ENCODE measurements at regions of chr11 and their contacts with region 1.

Region 1: GRCh38 chr11:61733120-61733978 is 19.1 kb upstream of the MYRF start:
- DNase-seq: peak; percentile 86
- H3K4me3 Mint-ChIP-seq: no peak overlapping the region
- H3K27ac Mint-ChIP-seq: no peak overlapping the region
- H3K4me1 Mint-ChIP-seq: peaks cover 23% of the 10 kb centered on the region
- H3K27me3 Mint-ChIP-seq: no peaks in the 10 kb centered on the region
- CTCF ChIP-seq: peak; percentile 94

Region 2: DNA sequence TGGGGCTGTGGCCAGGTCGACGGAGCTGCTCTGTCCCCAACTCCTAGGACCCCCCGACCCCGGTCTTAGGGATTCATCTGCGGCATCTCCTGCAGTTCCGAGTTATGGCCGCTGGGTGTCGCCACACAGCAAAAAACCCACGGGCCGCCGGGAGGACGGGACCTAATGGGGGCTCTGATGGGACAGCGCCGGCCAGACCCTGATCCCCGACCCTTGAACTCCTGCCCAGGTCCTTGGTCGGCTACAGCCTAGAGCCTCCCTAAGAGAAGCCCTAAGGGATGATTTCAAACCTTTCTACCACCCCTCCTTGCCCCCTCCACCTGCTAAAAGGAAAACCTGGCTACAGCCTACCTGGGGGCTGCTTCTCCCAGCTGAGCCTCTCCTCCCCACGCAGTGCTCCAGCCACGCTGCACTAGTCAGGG is 255.6 kb before region 1 on chr11:
- CTCF ChIA-PET with region 1: interaction called, 5 read pairs
- POLR2A ChIA-PET with region 1: no interaction called
- intact Hi-C with region 1: loop called (anchors 10 kb)
- DNase-seq: peak; percentile 27
- H3K4me3 Mint-ChIP-seq: no peak overlapping the region
- H3K27ac Mint-ChIP-seq: no peak overlapping the region
- H3K4me1 Mint-ChIP-seq: peaks cover 9% of the 10 kb centered on the region
- H3K27me3 Mint-ChIP-seq: no peaks in the 10 kb centered on the region
- CTCF ChIP-seq: peak; percentile 88

Region 3: DNA sequence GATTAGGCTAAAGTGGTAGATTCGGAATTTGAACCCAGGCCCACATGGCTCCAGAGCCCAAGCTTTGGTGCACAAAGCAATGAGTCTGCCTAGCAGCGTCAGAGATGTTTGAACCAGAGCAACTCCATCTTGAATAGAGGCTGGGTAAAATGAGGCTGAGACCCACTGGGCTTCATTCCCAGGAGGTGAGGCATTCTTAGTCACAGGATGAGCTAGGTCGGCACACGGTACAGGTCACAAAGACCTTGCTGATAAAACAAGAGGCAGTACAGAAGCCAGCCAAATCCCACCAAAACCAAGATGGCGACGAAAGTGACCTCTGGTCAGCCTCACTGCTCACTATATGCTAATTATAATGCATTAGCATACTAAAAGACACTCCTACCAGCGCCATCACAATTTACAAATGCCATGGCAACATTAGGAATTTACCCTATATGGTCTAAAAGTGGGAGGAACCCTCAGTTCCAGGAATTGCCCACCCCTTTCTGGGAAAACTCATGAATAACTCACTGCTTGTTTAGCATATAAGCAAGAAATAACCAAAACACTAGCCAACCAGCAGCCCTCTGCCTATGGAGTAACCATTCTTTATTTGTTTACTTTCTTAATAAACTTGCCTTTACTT is 93.4 kb before region 1 on chr11:
- CTCF ChIA-PET with region 1: interaction called, 20 read pairs
- POLR2A ChIA-PET with region 1: no interaction called
- intact Hi-C with region 1: loop called (anchors 2 kb)
- DNase-seq: no peak
- H3K4me3 Mint-ChIP-seq: no peak overlapping the region
- H3K27ac Mint-ChIP-seq: no peak overlapping the region
- H3K4me1 Mint-ChIP-seq: no peaks in the 10 kb centered on the region
- H3K27me3 Mint-ChIP-seq: peaks cover 27% of the 10 kb centered on the region
- CTCF ChIP-seq: no peak

Region 4: DNA sequence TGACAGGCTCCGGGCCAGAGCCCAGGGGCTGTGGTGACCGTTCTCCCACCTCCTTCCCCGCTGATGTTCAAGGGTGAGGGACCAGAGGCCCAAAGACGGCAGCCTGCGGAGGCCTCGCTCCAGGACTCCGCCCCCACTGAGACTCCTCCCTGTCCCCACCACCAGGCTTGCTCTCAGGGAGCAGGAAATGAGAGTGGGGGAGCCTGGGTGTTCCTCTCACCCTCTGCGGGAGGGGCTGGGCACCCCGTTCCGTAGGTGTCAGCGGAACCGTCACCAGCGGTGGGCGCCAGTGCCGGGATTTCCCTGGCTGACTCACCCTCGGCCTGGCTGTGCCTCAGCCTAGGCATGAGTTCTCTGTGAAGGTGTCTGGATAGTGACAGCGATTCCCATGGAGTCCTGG is 37.4 kb before region 1 on chr11:
- CTCF ChIA-PET with region 1: interaction called, 24 read pairs
- POLR2A ChIA-PET with region 1: interaction called, 9 read pairs
- intact Hi-C with region 1: loop called (anchors 1 kb)
- DNase-seq: peak; percentile 90
- H3K4me3 Mint-ChIP-seq: peak overlapping the region; percentile 55
- H3K27ac Mint-ChIP-seq: peak overlapping the region; percentile 31
- H3K4me1 Mint-ChIP-seq: peaks cover 44% of the 10 kb centered on the region
- H3K27me3 Mint-ChIP-seq: no peaks in the 10 kb centered on the region
- CTCF ChIP-seq: no peak

Region 5: DNA sequence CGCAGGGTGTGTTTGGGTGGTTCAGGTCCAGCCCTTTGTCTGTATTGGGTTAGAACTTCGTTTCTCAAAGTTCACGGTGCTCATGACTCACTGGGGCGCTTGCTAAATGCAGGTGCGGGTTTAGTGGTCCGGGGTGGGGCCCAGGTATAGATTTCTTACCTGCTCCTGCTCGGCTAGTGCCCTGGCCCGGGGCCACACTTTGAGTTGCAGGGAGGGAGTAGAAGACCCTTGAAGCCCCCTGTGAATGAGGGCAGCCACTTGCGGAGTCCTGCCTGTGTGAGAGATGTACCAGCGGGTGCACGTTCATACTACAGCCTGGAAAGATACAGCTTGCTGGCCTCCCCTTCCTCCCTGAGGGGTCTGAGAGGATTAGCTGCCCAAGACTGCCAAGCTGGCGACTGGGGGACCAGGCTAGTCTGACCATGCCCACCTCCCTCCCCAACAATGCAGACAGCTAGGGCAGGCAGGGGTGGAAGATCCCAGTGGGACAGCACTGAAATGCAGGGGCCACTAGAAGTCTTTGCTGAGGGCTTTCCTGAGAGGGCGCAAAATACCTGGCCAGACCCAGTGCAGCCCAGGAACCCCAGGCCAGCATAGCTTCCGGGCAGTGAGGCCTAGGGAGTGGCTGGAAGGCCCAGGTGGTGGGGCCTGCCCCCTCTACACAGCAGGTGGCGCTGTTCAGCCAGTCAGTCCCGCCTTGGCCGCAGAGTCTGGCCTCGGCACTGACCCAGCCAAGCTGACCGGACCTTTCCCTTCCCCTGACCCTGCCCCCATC is 14.0 kb after region 1 on chr11:
- CTCF ChIA-PET with region 1: interaction called, 11 read pairs
- POLR2A ChIA-PET with region 1: no interaction called
- intact Hi-C with region 1: no loop called
- DNase-seq: peak; percentile 69
- H3K4me3 Mint-ChIP-seq: no peak overlapping the region
- H3K27ac Mint-ChIP-seq: no peak overlapping the region
- H3K4me1 Mint-ChIP-seq: no peaks in the 10 kb centered on the region
- H3K27me3 Mint-ChIP-seq: no peaks in the 10 kb centered on the region
- CTCF ChIP-seq: peak; percentile 84

Region 6: DNA sequence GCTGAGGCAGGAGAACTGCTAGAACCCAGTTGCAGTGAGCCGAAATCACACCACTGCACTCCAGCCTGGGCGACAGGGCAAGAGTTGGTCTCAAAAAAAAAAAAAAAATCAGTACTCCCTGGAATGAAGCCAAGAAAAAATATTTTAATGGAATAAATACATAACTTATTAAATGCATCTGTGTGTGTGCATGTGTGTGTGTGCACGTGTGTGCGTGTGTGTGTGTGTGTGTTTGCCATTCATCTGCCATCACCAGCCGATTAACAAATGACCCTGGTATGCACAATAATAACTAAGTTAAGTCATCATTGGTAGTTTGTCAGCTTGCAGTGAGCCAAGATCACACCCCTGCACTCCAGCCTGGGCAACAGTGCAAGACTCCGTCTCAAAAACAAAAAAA is 650.5 kb after region 1 on chr11:
- CTCF ChIA-PET with region 1: no interaction called
- POLR2A ChIA-PET with region 1: no interaction called
- intact Hi-C with region 1: no loop called
- DNase-seq: no peak
- H3K4me3 Mint-ChIP-seq: no peak overlapping the region
- H3K27ac Mint-ChIP-seq: no peak overlapping the region
- H3K4me1 Mint-ChIP-seq: peaks cover 10% of the 10 kb centered on the region
- H3K27me3 Mint-ChIP-seq: peaks cover 2% of the 10 kb centered on the region
- CTCF ChIP-seq: no peak

Region 7: DNA sequence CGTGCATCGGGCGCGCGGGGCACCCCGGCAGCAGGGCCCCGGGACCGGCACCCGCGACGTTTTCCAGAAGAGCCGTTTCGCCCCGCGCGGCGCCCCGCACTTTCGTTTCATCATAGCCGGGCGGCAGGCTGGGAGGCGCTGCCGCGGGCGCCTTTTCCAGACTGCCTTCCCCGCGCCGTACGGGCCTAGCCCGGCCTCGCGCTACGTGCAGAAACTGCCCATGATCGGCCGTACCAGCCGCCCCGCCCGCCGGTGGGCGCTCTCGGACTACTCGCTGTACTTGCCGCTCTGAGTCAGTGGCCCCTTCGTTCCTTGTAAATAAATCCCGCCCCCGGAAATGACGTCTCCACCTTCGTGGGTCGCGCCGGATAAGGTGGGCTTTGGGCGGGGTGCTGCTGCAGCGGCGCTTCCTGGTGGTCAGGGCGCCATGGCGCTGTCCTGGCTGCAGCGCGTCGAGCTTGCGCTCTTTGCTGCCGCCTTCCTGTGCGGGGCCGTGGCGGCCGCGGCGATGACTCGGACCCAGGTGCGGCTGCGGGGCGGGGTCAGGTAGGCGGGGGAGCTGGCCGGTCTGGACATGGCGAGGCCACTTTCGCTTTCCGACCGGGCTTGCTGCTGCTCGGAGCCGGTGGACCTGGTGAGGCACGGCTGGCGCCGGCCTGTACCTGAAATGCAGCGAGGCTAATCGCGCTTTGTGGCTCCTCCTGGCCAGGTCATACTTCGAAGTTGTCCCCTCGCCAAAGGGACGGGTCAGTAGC is 1053.8 kb after region 1 on chr11 and contains the start of gene TMEM179B:
- CTCF ChIA-PET with region 1: no interaction called
- POLR2A ChIA-PET with region 1: no interaction called
- intact Hi-C with region 1: no loop called
- DNase-seq: peak; percentile 98
- H3K4me3 Mint-ChIP-seq: peak within 1 kb of the TSS; percentile 90
- H3K27ac Mint-ChIP-seq: peak within 1 kb of the TSS; percentile 93
- H3K4me1 Mint-ChIP-seq: peaks cover 15% of the 10 kb centered on the region
- H3K27me3 Mint-ChIP-seq: no peaks in the 10 kb centered on the region
- CTCF ChIP-seq: peak; percentile 40
- total RNA-seq, gene TMEM179B: 45.1 and 47.8 TPM in 2 replicates